Psoas muscle (tissue), 8 donors: ENCODE measurements at regions of chr12 and their contacts with region 1.

Region 1: DNA sequence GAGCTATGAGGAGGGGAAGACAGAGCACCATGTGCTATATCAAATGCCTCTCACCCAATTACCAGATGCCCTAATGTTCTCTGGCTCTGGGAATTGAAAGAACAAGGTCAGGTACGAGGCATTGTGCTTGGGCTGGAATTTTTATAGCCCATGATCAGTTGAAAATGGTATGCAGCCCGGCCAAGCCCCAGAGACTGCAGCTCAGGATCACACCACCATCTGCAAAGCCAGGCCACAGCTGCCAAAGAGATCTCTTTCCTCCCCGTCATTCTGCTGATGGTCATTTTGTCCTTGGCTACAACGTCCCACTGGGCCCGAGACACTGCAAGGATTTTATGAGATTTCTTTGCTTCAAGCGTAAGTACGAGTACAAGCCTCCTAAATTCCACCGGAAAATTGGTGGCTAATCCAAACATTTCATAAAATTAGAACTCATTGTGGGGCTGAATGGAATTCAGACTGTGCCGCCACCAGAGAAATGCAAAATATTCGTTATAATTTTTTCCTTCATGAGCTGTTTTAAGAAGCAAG is 15.1 kb downstream of the NUAK1 start:
- DNase-seq: peak; percentile 81 to 92
- ATAC-seq: peak; percentile 87 to 94 (median 90)
- H3K4me3 ChIP-seq: peak overlapping the region; percentile 11
- H3K27ac ChIP-seq: peak overlapping the region; percentile 82
- H3K4me1 ChIP-seq: peaks cover 89% of the 10 kb centered on the region
- H3K27me3 ChIP-seq: no peaks in the 10 kb centered on the region
- CTCF ChIP-seq: no peak

Region 2: GRCh38 chr12:105922670-105923102 is 200.9 kb before region 1 on chr12:
- intact Hi-C with region 1: loop called in 1 of 2 experiments (anchors 10 kb)
- DNase-seq: no peak
- ATAC-seq: peak; percentile 97 to 99 (median 98)
- H3K4me3 ChIP-seq: peak overlapping the region; percentile 1
- H3K27ac ChIP-seq: peak overlapping the region; percentile 90
- H3K4me1 ChIP-seq: peaks cover 24% of the 10 kb centered on the region
- H3K27me3 ChIP-seq: no peaks in the 10 kb centered on the region
- CTCF ChIP-seq: no peak

Region 3: GRCh38 chr12:106000372-106001104 is 123.1 kb before region 1 on chr12:
- intact Hi-C with region 1: no loop called
- DNase-seq: no peak
- ATAC-seq: no peak
- H3K4me3 ChIP-seq: no peak overlapping the region
- H3K27ac ChIP-seq: no peak overlapping the region
- H3K4me1 ChIP-seq: no peaks in the 10 kb centered on the region
- H3K27me3 ChIP-seq: no peaks in the 10 kb centered on the region
- CTCF ChIP-seq: no peak

Region 4: GRCh38 chr12:106044773-106045172 is 78.8 kb before region 1 on chr12:
- intact Hi-C with region 1: loop called in 1 of 2 experiments (anchors 5 kb)
- DNase-seq: no peak
- ATAC-seq: no peak
- H3K4me3 ChIP-seq: no peak overlapping the region
- H3K27ac ChIP-seq: no peak overlapping the region
- H3K4me1 ChIP-seq: no peaks in the 10 kb centered on the region
- H3K27me3 ChIP-seq: no peaks in the 10 kb centered on the region
- CTCF ChIP-seq: no peak

Region 5: DNA sequence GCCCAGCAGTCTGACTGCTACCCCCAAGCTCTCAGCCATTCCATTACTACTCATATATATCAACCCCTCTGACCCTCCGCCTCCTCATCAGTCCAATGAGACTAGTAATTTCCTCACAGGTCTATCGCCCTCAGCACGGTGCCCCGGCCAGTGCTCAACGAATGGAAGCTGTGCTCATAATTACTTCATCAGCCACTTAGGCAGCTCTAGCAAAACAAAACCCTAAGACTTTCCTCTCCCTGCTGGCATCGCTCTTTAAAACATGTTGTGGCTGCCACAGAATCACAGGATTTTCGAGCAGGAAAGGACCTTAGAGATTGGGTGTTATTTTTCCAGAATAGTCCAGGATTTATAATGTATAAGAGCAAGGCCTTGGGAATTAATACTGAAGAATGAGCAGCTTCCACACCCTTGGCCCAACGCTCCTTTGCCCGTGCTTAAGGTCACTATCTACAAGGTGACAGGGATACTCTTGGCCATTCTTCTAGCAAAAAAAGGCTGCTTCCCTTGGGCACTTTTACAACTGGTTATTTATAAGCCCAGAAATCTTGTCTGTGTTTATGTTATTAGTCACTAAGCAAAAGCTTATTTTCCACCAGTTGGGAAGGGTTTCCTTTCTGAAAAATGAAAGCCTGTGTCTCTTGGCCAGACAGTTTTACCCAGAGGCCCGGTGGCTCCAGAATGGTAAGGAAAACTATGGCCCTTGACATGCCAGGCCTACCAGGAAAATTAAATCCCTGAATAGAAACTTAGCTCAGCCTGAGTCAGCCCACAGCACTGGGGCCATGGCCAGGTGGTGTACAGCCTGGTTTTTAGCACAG is 32.8 kb before region 1 on chr12:
- intact Hi-C with region 1: loop called in 1 of 2 experiments (anchors 5 kb)
- DNase-seq: peak; percentile 59 to 62
- ATAC-seq: peak; percentile 85 to 95 (median 90)
- H3K4me3 ChIP-seq: no peak overlapping the region
- H3K27ac ChIP-seq: peak overlapping the region; percentile 82
- H3K4me1 ChIP-seq: peaks cover 38% of the 10 kb centered on the region
- H3K27me3 ChIP-seq: no peaks in the 10 kb centered on the region
- CTCF ChIP-seq: no peak